WTC11 (cell line): ENCODE measurements at regions of chr22 and their contacts with region 1.

Region 1: DNA sequence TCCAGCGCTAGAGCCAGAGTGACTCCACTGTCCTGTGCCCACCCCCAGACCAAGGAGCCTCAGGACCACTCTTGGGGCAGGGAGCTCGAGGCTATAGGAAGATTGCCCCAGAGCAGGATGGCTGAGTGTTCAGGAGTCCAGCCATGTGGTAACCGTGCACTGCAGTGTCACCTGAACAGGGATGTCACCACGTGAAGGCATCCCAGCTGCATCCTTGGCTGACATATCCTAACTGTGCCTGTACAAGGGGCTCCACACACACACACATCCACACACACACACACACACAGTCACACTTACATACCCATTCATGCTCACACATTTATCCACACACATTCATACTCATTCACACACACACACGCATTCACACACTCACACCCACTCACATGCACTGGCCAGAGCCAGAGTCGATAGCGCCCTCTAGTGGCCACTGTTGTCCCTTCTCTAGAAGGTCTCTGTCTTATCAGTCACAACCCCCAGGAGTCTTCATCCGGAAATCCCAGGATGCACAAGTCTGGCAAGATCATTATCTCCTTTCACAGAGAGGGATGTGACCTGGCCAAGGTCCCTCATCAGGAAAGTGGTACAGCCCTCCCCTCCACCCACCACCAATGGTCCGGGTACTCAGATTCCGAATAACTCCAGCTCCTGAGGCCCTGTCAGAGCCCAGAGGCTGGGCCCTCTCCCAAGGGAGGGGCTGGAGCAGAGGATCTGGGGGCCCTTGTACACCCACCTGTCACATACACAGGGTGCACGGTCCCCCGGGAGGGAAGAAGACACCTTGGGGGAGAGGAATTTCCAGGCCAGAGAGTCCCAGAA is 55.1 kb downstream of the IGLL5 start:
- DNase-seq: peak; percentile 91
- ATAC-seq: peak; percentile 88
- H3K4me3 Mint-ChIP-seq: no peak overlapping the region
- H3K27ac Mint-ChIP-seq: no peak overlapping the region
- H3K4me1 Mint-ChIP-seq: no peaks in the 10 kb centered on the region
- H3K27me3 Mint-ChIP-seq: peaks cover 51% of the 10 kb centered on the region
- CTCF ChIP-seq: peak; percentile 94

Region 2: GRCh38 chr22:22903355-22903777 is 39.4 kb before region 1 on chr22:
- CTCF ChIA-PET with region 1: interaction called, 14 read pairs
- POLR2A ChIA-PET with region 1: no interaction called
- DNase-seq: no peak
- ATAC-seq: no peak
- H3K4me3 Mint-ChIP-seq: no peak overlapping the region
- H3K27ac Mint-ChIP-seq: no peak overlapping the region
- H3K4me1 Mint-ChIP-seq: no peaks in the 10 kb centered on the region
- H3K27me3 Mint-ChIP-seq: peaks cover 63% of the 10 kb centered on the region
- CTCF ChIP-seq: no peak

Region 3: GRCh38 chr22:22928666-22929380 is 13.9 kb before region 1 on chr22:
- CTCF ChIA-PET with region 1: interaction called, 26 read pairs
- POLR2A ChIA-PET with region 1: no interaction called
- DNase-seq: no peak
- ATAC-seq: no peak
- H3K4me3 Mint-ChIP-seq: no peak overlapping the region
- H3K27ac Mint-ChIP-seq: no peak overlapping the region
- H3K4me1 Mint-ChIP-seq: peaks cover 23% of the 10 kb centered on the region
- H3K27me3 Mint-ChIP-seq: peaks cover 50% of the 10 kb centered on the region
- CTCF ChIP-seq: no peak

Region 4: GRCh38 chr22:22981670-22982571 is 39.2 kb after region 1 on chr22:
- CTCF ChIA-PET with region 1: no interaction called
- POLR2A ChIA-PET with region 1: no interaction called
- DNase-seq: no peak
- ATAC-seq: no peak
- H3K4me3 Mint-ChIP-seq: no peak overlapping the region
- H3K27ac Mint-ChIP-seq: no peak overlapping the region
- H3K4me1 Mint-ChIP-seq: no peaks in the 10 kb centered on the region
- H3K27me3 Mint-ChIP-seq: peaks cover 62% of the 10 kb centered on the region
- CTCF ChIP-seq: no peak

Region 5: GRCh38 chr22:23054531-23055257 is 112.0 kb after region 1 on chr22:
- CTCF ChIA-PET with region 1: no interaction called
- POLR2A ChIA-PET with region 1: no interaction called
- DNase-seq: peak; percentile 5
- ATAC-seq: no peak
- H3K4me3 Mint-ChIP-seq: no peak overlapping the region
- H3K27ac Mint-ChIP-seq: no peak overlapping the region
- H3K4me1 Mint-ChIP-seq: no peaks in the 10 kb centered on the region
- H3K27me3 Mint-ChIP-seq: peaks cover 29% of the 10 kb centered on the region
- CTCF ChIP-seq: no peak